Mammary epithelial cell (primary cell): ENCODE measurements at regions of chr6 and their contacts with region 1.

Region 1: GRCh38 chr6:73515204-73515655 is 5.6 kb downstream of the EEF1A1 start:
- DNase-seq: peak; percentile 43
- H3K4me3 ChIP-seq: no peak overlapping the region
- H3K27ac ChIP-seq: peak overlapping the region; percentile 26
- H3K4me1 ChIP-seq: no peaks in the 10 kb centered on the region
- H3K27me3 ChIP-seq: no peaks in the 10 kb centered on the region
- CTCF ChIP-seq: no peak

Region 2: GRCh38 chr6:73491377-73491776 is 23.9 kb before region 1 on chr6:
- CTCF ChIA-PET with region 1: no interaction called
- dilution Hi-C with region 1: no loop called
- in situ Hi-C with region 1: no loop called
- intact Hi-C with region 1: no loop called
- DNase-seq: no peak
- H3K4me3 ChIP-seq: no peak overlapping the region
- H3K27ac ChIP-seq: no peak overlapping the region
- H3K4me1 ChIP-seq: no peaks in the 10 kb centered on the region
- H3K27me3 ChIP-seq: no peaks in the 10 kb centered on the region
- CTCF ChIP-seq: no peak

Region 3: DNA sequence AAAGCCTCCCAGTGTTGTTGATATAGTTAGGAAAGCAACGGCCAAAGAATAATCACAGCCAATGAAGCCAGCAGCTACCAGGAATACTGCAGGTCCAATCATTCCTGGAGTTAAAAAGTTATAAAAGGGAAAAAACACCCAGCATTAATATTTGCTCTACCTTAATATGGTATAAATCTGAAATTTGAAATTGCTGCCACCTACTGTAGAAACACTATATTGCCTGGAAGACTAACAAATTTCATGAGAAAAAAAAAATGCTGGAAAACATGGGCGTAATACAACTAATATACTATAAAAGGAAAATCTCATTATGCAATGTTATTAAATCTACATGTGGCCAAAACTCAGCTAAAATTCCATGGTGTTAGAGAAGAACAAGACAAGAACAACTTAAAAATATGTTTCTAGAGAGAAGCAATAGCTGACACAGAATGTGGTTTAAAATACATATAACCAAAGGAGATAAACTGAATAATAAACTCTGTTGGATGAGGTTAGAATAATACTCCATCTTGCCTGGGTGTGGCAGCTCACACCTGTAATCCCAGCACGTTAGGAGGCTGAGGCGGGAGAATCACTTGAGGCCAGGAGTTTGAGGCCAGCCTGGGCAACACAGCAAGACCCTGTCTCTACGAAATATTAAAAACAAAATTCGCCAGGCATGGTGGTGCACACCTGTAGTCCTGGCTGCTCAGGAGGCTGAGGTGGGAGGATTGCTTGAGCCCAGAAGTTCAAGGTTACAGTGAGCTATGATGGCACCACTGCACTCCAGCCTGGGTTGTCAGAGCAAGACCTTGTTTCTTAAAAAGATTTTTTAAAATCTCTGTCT is 95.4 kb after region 1 on chr6:
- CTCF ChIA-PET with region 1: interaction called, 4 read pairs
- dilution Hi-C with region 1: loop called (anchors 10 kb)
- in situ Hi-C with region 1: loop called in 1 of 2 experiments (anchors 25 kb)
- intact Hi-C with region 1: loop called (anchors 1 kb)
- DNase-seq: peak; percentile 33
- H3K4me3 ChIP-seq: no peak overlapping the region
- H3K27ac ChIP-seq: no peak overlapping the region
- H3K4me1 ChIP-seq: no peaks in the 10 kb centered on the region
- H3K27me3 ChIP-seq: no peaks in the 10 kb centered on the region
- CTCF ChIP-seq: peak; percentile 61

Region 4: DNA sequence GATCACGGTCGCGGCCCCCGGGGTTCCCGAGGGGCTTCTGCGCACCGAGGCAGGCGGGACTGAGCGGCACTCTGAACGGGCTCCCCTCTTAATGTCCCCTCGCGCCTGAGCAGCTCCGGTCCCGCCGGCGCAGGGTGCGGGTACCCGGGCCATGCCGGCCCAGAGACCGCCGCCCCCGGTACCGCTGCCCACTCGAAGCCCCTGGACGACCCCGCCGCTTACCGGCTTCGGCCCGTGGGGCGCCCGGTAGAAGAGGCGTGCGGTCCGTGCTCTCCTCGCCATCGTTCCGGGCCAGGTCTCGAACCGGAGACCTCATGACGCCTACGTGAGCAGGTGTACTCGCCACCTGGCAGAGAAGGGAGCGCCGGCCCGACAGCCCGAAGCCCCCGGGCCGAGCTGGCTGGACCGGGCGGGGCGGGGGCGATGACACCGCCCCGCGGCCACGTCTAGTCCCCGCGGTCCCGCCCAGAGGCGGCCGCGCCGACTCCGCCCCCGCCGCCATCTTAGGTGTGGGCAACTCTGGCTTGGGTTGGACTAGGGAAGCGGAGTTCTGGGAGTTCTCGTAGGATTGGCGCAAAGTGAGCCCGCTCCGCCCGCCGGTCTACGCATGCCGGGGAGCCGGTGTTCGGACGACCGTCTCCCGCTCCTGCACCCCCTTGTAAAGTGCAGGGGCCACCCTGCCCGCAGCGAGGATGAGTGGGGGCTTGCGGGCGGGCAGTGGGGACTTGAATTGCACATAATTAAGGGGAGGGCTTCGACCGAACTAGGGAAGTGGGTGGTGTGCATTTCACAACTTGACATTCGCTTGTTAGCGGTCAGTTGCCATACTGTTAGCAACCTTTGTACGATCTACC is 138.6 kb after region 1 on chr6 and contains the start of gene SLC17A5:
- CTCF ChIA-PET with region 1: no interaction called
- dilution Hi-C with region 1: loop called (anchors 10 kb)
- in situ Hi-C with region 1: no loop called
- intact Hi-C with region 1: loop called (anchors 2 kb)
- DNase-seq: peak; percentile 92
- H3K4me3 ChIP-seq: peak within 1 kb of the TSS; percentile 59 to 99 (median 85)
- H3K27ac ChIP-seq: peak within 1 kb of the TSS; percentile 62
- H3K4me1 ChIP-seq: peaks cover 13% of the 10 kb centered on the region
- H3K27me3 ChIP-seq: no peaks in the 10 kb centered on the region
- CTCF ChIP-seq: no peak
- total RNA-seq, gene SLC17A5: 6.5 to 26.0 TPM

Region 5: GRCh38 chr6:73675466-73676098 is 160.4 kb after region 1 on chr6:
- CTCF ChIA-PET with region 1: no interaction called
- dilution Hi-C with region 1: no loop called
- in situ Hi-C with region 1: no loop called
- intact Hi-C with region 1: no loop called
- DNase-seq: peak; percentile 72
- H3K4me3 ChIP-seq: no peak overlapping the region
- H3K27ac ChIP-seq: no peak overlapping the region
- H3K4me1 ChIP-seq: peaks cover 10% of the 10 kb centered on the region
- H3K27me3 ChIP-seq: no peaks in the 10 kb centered on the region
- CTCF ChIP-seq: peak; percentile 92 to 95